ENCODE measurements at regions of chr17 and their contacts with region 1.

Region 1: GRCh38 chr17:35537601-35538141 is at the start of gene SLFN12L:
- DNase-seq: no peak
- H3K4me3 ChIP-seq: peak within 1 kb of the TSS; percentile 5 to 66 (median 41)
- H3K27ac ChIP-seq: peak within 1 kb of the TSS; percentile 72 to 96 (median 90)
- H3K4me1 ChIP-seq: peaks cover 15 to 88% (median 50%) of the 10 kb centered on the region in 6 donors
- H3K27me3 ChIP-seq: no peaks in the 10 kb centered on the region
- CTCF ChIP-seq: no peak
- POLR2A ChIP-seq: no peak
- total RNA-seq, gene SLFN12L: 28.6 to 39.5 (median 32.5) TPM

Region 2: DNA sequence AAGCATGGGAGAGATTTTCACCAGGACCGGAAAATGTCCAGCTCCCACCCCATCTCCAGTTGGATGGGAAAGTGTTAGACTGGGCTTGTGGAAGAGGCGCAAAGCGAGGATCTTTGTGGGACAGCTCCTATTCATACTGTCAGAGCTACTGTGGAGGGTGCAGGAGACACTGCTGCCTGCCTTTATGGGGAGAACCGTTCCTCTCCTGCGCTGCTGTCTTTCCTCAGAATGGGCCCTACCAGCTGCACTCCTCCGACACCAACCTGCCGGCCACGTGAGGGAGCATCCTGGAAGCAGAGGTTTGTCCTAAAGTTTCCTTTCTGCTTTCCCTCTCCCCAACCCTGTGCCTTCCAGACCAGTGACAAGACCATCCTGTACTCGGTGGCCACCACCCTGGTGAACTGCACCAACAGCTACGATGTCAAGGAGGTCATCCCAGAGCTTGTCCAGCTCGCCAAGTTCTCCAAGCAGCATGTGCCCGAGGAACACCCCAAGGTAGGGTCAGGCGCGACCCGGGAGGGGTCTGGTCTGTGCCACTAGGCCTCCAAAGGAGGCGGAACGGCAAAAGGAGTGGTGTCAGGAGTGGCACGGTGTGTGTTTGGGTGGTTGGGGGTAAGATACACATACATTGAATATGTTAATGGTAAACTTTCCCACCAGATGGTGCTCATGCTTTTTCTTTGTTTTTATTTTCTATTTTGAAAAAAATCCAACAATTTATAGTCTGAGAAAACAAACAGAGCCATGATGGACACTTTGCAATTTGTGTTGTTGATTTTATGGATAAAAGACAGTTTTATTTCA is 366.5 kb before region 1 on chr17:
- intact Hi-C with region 1: loop called (anchors 5 kb)
- DNase-seq: no peak
- H3K4me3 ChIP-seq: no peak overlapping the region
- H3K27ac ChIP-seq: peak overlapping the region in 4 of 8 donors; percentile 4 to 20 (median 10)
- H3K4me1 ChIP-seq: peaks cover 0 to 20% (median 10%) of the 10 kb centered on the region in 6 donors
- H3K27me3 ChIP-seq: no peaks in the 10 kb centered on the region
- CTCF ChIP-seq: peak in 10 of 11 experiments; percentile 35 to 69 (median 50)
- POLR2A ChIP-seq: no peak

Region 3: DNA sequence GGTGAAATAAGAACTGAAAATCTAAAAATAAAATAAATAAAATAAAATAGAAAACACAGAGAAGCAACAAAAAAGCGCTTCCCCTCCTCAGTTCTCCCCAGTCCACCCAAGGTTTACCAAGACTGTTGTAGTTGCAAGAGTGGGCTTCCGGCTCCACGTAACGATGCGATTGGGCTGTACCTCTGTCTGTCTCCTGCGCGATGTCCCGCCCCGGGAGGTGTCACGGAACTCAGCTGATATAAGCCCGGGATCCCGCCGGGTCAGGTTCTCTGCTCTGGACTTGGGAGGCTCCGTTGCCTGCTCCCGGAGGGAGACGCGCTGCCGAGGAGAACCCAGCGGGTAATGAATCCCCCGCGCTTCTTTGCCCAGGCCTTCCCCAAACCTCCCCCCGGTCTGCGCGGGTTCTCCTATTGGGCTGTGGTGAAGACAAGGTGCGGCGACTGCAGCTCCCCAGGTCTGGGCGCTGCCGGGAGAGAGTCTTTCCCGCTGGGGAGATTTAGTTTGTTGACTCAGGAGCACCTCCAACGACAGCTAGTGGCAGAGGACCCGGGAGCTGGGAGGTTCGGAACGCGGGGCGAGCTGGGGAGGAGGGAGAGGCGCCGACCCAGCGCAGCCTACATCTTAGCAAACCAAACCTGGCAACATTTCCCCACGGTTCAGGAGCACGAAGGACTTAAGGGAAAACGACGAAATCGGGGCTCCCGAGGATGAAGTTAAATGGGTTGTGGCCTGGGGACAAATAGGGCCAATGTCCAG is 294.7 kb before region 1 on chr17 and contains the start of gene SLFN5:
- intact Hi-C with region 1: loop called (anchors 10 kb)
- DNase-seq: peak; percentile 96
- H3K4me3 ChIP-seq: peak within 1 kb of the TSS; percentile 60 to 83 (median 77)
- H3K27ac ChIP-seq: peak within 1 kb of the TSS; percentile 87 to 97 (median 95)
- H3K4me1 ChIP-seq: peaks cover 23 to 92% (median 69%) of the 10 kb centered on the region in 6 donors
- H3K27me3 ChIP-seq: no peaks in the 10 kb centered on the region
- CTCF ChIP-seq: no peak
- POLR2A ChIP-seq: peak; percentile 45 to 90 (median 57)
- total RNA-seq, gene SLFN5: 67.9 to 110 (median 77.6) TPM

Region 4: DNA sequence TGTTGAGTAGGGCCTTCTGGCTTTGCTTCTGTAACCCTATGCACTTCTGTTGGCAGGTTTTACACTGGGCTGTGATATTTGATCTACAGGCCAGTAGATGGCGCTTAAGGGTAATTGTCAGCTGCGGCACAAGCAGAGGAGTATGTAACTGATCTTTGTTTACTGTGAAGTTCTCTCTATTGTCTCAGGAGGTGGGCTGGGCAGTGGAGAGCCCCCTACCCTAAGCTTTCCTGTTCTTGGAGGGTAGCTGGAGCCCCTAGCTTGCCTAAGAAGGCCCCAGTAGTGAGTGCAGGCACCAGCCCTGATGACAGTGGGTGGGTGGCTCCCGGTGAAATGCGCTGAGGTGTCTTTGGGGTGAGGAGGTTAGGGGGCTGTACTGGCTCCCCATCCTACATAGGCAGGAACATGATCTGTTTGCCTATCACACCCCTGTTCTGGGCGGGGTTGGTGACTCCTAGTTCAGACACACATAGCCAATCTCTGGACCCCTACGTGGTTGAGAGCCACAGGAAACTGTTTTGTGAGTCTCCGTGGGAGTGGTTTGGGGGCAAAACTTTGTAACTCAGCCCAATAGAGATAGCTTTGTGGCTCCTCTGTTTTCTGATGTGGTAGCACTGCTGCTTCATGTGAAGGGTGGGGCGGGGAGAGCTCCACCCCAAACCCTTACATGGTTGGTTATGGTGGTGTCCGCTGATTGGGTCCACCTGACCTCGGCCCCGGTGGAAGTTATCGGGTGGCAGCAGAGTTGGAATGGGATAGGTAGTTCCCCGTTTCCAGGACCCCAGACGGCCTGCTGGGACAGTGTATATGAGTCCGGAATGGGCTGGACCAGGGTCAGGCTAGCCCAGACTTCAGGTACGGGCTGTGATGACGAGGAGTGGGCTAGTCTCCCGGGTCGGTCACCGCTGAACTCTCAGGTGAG is 224.6 kb before region 1 on chr17:
- intact Hi-C with region 1: loop called (anchors 2 kb)
- DNase-seq: peak; percentile 89
- H3K4me3 ChIP-seq: peak overlapping the region; percentile 16 to 67 (median 42)
- H3K27ac ChIP-seq: peak overlapping the region; percentile 64 to 87 (median 84)
- H3K4me1 ChIP-seq: peaks cover 3 to 34% (median 24%) of the 10 kb centered on the region in 6 donors
- H3K27me3 ChIP-seq: no peaks in the 10 kb centered on the region
- CTCF ChIP-seq: peak; percentile 73 to 92 (median 85)
- POLR2A ChIP-seq: no peak

Region 5: GRCh38 chr17:35630530-35631148 is 93.0 kb after region 1 on chr17:
- intact Hi-C with region 1: no loop called
- DNase-seq: no peak
- H3K4me3 ChIP-seq: no peak overlapping the region
- H3K27ac ChIP-seq: no peak overlapping the region
- H3K4me1 ChIP-seq: peaks cover 0 to 10% (median 0%) of the 10 kb centered on the region in 6 donors
- H3K27me3 ChIP-seq: no peaks in the 10 kb centered on the region
- CTCF ChIP-seq: no peak
- POLR2A ChIP-seq: no peak

Measured in spleen (tissue), 13 donors.